Ascending aorta (tissue), 2 donors: ENCODE measurements at regions of chr11 and their contacts with region 1.

Region 1: GRCh38 chr11:117143871-117144476 is at the start of gene PAFAH1B2:
- DNase-seq: peak; percentile 81 to 97
- H3K4me3 ChIP-seq: peak within 1 kb of the TSS; percentile 92 to 98
- H3K27ac ChIP-seq: peak within 1 kb of the TSS; percentile 91 to 95
- H3K4me1 ChIP-seq: peaks cover 3 to 18% of the 10 kb centered on the region in 2 donors
- H3K27me3 ChIP-seq: no peaks in the 10 kb centered on the region
- CTCF ChIP-seq: no peak
- total RNA-seq, gene PAFAH1B2: 60.7 TPM

Region 2: GRCh38 chr11:117098269-117099232 is 45.4 kb before region 1 on chr11 and contains the start of gene SIK3:
- intact Hi-C with region 1: loop called (anchors 2 kb)
- DNase-seq: peak; percentile 62 to 96
- H3K4me3 ChIP-seq: peak within 1 kb of the TSS; percentile 99
- H3K27ac ChIP-seq: peak within 1 kb of the TSS; percentile 90 to 99
- H3K4me1 ChIP-seq: peaks cover 4 to 32% of the 10 kb centered on the region in 2 donors
- H3K27me3 ChIP-seq: no peaks in the 10 kb centered on the region
- CTCF ChIP-seq: peak; percentile 29 to 52 (median 49)
- total RNA-seq, gene SIK3: 22.5 TPM

Region 3: DNA sequence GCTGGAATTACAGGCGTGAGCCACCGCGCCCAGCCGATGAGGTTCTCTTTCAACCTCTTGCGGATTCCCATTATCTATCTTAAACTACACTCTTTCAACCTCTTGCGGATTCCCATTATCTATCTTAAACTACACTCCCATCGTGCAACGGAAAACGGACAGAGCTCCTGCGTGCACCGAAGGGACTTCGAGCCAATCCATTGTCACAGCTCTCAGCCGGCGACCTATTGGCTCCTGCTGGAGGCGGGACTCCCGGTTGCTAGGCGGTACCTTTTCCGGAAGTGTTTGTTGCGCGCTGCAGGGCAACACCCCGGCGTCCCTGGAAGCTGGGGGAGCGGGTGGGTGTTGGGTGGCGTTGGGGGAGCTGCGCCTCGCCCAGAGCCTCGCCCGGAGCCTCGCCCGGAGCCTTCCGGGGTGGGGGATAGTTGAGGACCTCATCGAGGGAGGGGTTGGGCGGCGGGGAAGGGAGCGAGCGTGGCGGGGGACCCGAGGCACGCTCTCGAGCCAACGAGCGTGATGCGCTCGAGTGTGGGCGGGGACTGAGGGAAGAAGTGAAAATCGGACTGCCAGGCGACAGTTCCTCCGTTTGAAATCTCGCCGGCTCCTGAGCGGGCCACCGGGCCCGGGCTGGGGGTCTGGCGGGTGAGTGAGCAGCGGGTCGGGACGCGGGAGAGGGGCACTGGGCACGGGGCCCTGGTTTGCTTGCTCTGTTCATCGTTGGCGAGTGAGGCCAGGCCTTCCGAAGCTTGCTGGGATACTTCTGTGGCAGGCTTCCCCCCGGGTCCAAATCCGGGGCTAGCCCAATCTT is 183.8 kb after region 1 on chr11 and contains the start of gene CEP164:
- intact Hi-C with region 1: loop called (anchors 5 kb)
- DNase-seq: peak; percentile 91 to 98
- H3K4me3 ChIP-seq: peak within 1 kb of the TSS; percentile 82 to 87
- H3K27ac ChIP-seq: peak within 1 kb of the TSS; percentile 88 to 89
- H3K4me1 ChIP-seq: peaks cover 0 to 6% of the 10 kb centered on the region in 2 donors
- H3K27me3 ChIP-seq: no peaks in the 10 kb centered on the region
- CTCF ChIP-seq: no peak
- total RNA-seq, gene CEP164: 15.1 TPM